ENCODE measurements at regions of chr17 and their contacts with region 1.

Region 1: DNA sequence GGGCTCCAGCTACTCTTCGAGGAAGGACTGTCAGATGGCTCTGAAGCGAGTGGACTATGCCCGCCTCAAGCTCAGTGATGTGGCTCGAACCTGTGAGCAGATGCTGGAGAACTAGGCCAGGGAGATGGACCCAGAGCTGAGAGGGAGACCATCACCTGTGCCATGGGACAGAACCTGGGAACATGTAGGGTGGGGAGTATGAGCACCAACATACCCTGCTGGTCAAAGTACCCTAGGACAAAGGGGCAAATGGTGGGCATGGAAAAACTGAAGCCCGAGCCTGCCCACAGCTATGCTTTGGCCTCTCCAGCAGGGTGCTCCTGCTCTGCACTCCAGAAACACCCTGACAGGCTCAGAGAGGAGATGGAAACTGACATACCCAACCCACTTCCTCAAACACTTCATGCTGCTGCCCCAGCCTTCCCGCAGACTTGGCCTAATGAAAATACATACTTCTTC is 1.9 kb downstream of the MED11 start:
- DNase-seq: no peak
- H3K4me3 ChIP-seq: no peak overlapping the region
- H3K4me3 Mint-ChIP-seq: peak overlapping the region in 2 of 8 donors; percentile 51 to 67
- H3K27ac ChIP-seq: no peak overlapping the region
- H3K27ac Mint-ChIP-seq: peak overlapping the region in 1 of 7 donors; percentile 90
- H3K4me1 ChIP-seq: peaks cover 18% of the 10 kb centered on the region
- H3K4me1 Mint-ChIP-seq: peaks cover 9 to 32% (median 16%) of the 10 kb centered on the region in 4 donors
- H3K27me3 ChIP-seq: no peaks in the 10 kb centered on the region
- H3K27me3 Mint-ChIP-seq: no peaks in the 10 kb centered on the region

Region 2: DNA sequence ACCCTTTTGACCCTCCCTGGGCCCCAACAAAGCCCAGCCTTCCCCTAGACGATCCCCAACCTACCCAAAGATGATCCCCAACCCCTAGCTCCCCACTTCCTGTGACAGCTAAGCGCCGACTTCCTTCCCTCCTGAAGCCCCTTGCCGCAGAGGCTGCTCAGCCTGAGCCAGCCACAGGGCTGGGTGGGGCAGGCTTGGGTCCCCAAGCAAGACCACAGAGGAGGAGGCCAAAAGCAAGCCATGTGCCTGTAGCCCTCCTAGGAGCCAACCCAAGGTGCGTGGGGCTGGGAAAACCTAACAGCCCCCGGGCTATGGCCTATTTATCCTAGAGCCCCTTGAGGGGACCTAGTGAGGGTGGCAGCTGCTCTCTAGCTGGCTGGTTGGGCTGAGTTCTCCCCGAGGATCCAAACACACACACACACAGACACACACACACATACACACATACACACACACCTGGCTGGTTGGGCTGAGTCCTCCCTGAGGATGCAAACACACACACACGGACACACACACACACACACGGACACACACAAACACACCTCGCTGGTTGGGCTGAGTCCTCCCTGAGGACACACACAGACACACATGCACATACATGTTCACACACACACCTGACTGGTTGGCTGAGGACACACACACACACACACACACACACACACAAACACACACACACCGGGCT is 17.9 kb before region 1 on chr17:
- CTCF ChIA-PET with region 1: interaction called, 15 read pairs
- POLR2A ChIA-PET with region 1: interaction called, 52 read pairs
- intact Hi-C with region 1: loop called (anchors 1 kb)
- DNase-seq: peak; percentile 53 to 79 (median 56)
- H3K4me3 ChIP-seq: peak overlapping the region; percentile 37 to 57
- H3K4me3 Mint-ChIP-seq: peak overlapping the region; percentile 74 to 93 (median 84)
- H3K27ac ChIP-seq: peak overlapping the region; percentile 50
- H3K27ac Mint-ChIP-seq: peak overlapping the region; percentile 86 to 98 (median 96)
- H3K4me1 ChIP-seq: peaks cover 54% of the 10 kb centered on the region
- H3K4me1 Mint-ChIP-seq: peaks cover 31 to 52% (median 42%) of the 10 kb centered on the region in 4 donors
- H3K27me3 ChIP-seq: no peaks in the 10 kb centered on the region
- H3K27me3 Mint-ChIP-seq: no peaks in the 10 kb centered on the region

Region 3: DNA sequence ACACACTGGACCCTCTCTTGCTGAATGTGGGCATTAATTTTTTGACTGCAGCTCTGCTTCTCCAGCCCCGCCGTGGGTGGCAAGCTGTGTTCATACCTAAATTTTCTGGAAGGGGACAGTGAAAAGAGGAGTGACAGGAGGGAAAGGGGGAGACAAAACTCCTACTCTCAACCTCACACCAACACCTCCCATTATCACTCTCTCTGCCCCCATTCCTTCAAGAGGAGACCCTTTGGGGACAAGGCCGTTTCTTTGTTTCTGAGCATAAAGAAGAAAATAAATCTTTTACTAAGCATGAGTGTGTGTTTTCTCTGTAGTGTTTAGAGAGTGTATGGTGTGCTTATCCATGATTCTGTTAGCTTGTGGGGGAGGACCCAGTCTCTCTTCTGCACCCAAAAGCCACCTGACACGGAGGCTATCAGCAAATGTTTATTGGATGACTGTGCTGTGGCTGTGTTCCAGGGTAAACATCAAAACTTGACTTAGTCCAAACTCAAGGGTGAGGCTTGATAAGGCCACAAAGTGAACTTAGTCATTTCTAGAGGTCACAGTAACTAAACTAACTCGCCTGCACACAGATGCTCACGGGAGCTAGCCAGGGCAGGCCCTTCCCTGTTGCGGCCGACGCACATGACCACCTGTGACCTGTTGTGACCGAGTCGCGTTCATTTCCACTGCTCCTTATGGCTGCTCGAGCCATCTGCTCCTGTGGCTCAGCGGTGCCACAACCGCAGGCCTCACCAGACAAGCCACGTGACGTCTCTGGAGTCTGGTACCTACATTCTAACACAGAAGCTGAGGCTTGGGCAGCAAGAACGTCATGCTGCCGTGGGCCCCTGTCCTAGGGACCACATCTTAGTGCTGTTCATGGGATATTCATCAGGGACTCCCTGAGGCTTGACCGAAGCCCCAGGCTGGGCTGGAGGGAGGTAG is 11.6 kb before region 1 on chr17:
- CTCF ChIA-PET with region 1: no interaction called
- POLR2A ChIA-PET with region 1: interaction called, 11 read pairs
- intact Hi-C with region 1: no loop called
- DNase-seq: no peak
- H3K4me3 ChIP-seq: no peak overlapping the region
- H3K4me3 Mint-ChIP-seq: peak overlapping the region in 1 of 8 donors; percentile 20
- H3K27ac ChIP-seq: no peak overlapping the region
- H3K27ac Mint-ChIP-seq: peak overlapping the region in 6 of 7 donors; percentile 16 to 70 (median 62)
- H3K4me1 ChIP-seq: peaks cover 6% of the 10 kb centered on the region
- H3K4me1 Mint-ChIP-seq: peaks cover 3 to 15% (median 6%) of the 10 kb centered on the region in 4 donors
- H3K27me3 ChIP-seq: no peaks in the 10 kb centered on the region
- H3K27me3 Mint-ChIP-seq: no peaks in the 10 kb centered on the region

Region 4: DNA sequence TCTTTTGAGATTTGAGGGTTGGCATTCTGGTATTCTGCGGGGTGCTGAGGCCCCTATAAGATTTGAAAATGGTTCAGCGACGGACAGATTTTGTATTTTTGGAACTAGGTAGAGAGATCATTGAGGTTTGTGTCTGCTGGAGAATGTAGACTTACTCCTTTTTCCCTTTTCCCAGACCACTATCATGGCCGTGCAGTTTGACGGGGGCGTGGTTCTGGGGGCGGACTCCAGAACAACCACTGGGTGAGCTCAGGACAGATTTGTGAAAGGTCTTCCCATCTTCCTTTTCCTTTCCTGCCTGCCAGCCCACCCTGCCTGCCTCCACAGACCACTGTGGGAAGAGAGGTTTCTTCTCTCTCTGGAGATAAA is 63.4 kb after region 1 on chr17:
- CTCF ChIA-PET with region 1: no interaction called
- POLR2A ChIA-PET with region 1: interaction called, 9 read pairs
- intact Hi-C with region 1: loop called (anchors 1 kb)
- DNase-seq: no peak
- H3K4me3 ChIP-seq: peak overlapping the region; percentile 62 to 90
- H3K4me3 Mint-ChIP-seq: peak overlapping the region; percentile 99 to 100 (median 100)
- H3K27ac ChIP-seq: peak overlapping the region; percentile 83
- H3K27ac Mint-ChIP-seq: peak overlapping the region; percentile 90 to 99 (median 98)
- H3K4me1 ChIP-seq: peaks cover 10% of the 10 kb centered on the region
- H3K4me1 Mint-ChIP-seq: peaks cover 11 to 16% (median 11%) of the 10 kb centered on the region in 4 donors
- H3K27me3 ChIP-seq: no peaks in the 10 kb centered on the region
- H3K27me3 Mint-ChIP-seq: no peaks in the 10 kb centered on the region

Region 5: GRCh38 chr17:4881761-4882555 is 148.9 kb after region 1 on chr17:
- CTCF ChIA-PET with region 1: interaction called, 19 read pairs
- POLR2A ChIA-PET with region 1: no interaction called
- intact Hi-C with region 1: loop called (anchors 1 kb)
- DNase-seq: peak in 4 of 5 donors; percentile 64 to 69 (median 65)
- H3K4me3 ChIP-seq: no peak overlapping the region
- H3K4me3 Mint-ChIP-seq: no peak overlapping the region
- H3K27ac ChIP-seq: no peak overlapping the region
- H3K27ac Mint-ChIP-seq: peak overlapping the region in 2 of 7 donors; percentile 29 to 37
- H3K4me1 ChIP-seq: no peaks in the 10 kb centered on the region
- H3K4me1 Mint-ChIP-seq: peaks cover 0 to 3% (median 0%) of the 10 kb centered on the region in 4 donors
- H3K27me3 ChIP-seq: no peaks in the 10 kb centered on the region
- H3K27me3 Mint-ChIP-seq: no peaks in the 10 kb centered on the region

Region 6: DNA sequence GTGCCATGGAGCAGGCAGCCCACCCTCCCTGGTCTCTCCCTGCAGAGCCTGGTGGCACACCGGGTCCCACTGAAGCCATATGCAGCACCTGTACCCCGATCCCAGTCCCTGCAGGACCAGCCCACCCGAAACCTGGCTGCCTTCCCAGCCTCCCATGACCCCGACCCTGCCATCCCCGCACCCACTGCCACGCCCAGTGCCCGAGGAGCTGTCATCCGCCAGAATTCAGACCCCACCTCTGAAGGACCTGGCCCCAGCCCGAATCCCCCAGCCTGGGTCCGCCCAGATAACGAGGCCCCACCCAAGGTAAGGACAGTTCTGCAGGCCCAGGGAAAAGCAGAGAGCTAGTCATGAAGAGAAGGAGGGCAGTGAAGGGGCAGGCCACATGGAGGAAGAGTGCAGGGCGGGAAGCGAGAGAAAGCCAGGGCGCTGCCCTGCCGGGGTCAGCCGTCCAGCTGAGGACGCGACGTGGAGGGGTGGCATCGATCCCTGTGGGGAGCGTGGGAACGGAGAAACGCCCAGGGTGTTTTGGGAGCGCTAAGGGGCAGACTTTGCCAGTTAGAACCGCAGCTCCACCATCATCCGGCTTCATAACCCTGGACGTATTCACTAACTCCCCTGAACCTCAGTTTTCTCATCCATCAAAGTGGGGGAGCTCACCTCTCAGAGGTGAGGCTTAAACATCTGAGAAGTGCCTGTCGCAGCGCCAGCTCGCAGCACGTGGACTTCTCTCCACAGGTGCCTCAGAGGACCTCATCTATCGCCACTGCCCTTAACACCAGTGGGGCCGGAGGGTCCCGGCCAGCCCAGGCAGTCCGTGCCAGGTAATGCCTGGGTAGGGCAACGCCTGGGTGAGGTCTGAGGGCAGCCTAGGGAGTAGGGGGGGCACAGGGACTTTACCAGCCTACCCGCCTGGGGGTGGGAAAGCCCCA is 158.6 kb after region 1 on chr17:
- CTCF ChIA-PET with region 1: interaction called, 3 read pairs
- POLR2A ChIA-PET with region 1: no interaction called
- intact Hi-C with region 1: loop called (anchors 1 kb)
- DNase-seq: no peak
- H3K4me3 ChIP-seq: no peak overlapping the region
- H3K4me3 Mint-ChIP-seq: no peak overlapping the region
- H3K27ac ChIP-seq: no peak overlapping the region
- H3K27ac Mint-ChIP-seq: no peak overlapping the region
- H3K4me1 ChIP-seq: no peaks in the 10 kb centered on the region
- H3K4me1 Mint-ChIP-seq: peaks cover 0 to 6% (median 2%) of the 10 kb centered on the region in 4 donors
- H3K27me3 ChIP-seq: no peaks in the 10 kb centered on the region
- H3K27me3 Mint-ChIP-seq: no peaks in the 10 kb centered on the region

Region 7: GRCh38 chr17:4939796-4940624 is 206.9 kb after region 1 on chr17 and contains the starts of genes RNF167 and SLC25A11:
- CTCF ChIA-PET with region 1: no interaction called
- POLR2A ChIA-PET with region 1: no interaction called
- intact Hi-C with region 1: loop called (anchors 5 kb)
- DNase-seq: peak; percentile 96 to 99 (median 99)
- H3K4me3 ChIP-seq: peak within 1 kb of the TSS; percentile 99
- H3K4me3 Mint-ChIP-seq: peak within 1 kb of the TSS; percentile 95 to 100 (median 98)
- H3K27ac ChIP-seq: peak within 1 kb of the TSS; percentile 81
- H3K27ac Mint-ChIP-seq: peak within 1 kb of the TSS; percentile 92 to 100 (median 98)
- H3K4me1 ChIP-seq: peaks cover 57% of the 10 kb centered on the region
- H3K4me1 Mint-ChIP-seq: peaks cover 43 to 72% (median 55%) of the 10 kb centered on the region in 4 donors
- H3K27me3 ChIP-seq: no peaks in the 10 kb centered on the region
- H3K27me3 Mint-ChIP-seq: no peaks in the 10 kb centered on the region
- total RNA-seq, gene RNF167: 154 to 172 TPM
- total RNA-seq, gene SLC25A11: 43.5 to 49.5 TPM